B cell (primary cell): ENCODE measurements at regions of chr20 and their contacts with region 1.

Region 1: GRCh38 chr20:63627129-63627750 is 339 bp upstream of the GMEB2 start:
- DNase-seq: peak; percentile 98
- ATAC-seq: peak; percentile 78
- H3K4me3 ChIP-seq: peak overlapping the region; percentile 38 to 90 (median 87)
- H3K4me3 Mint-ChIP-seq: peak overlapping the region; percentile 95
- H3K27ac ChIP-seq: peak overlapping the region; percentile 75 to 84
- H3K27ac Mint-ChIP-seq: peak overlapping the region; percentile 93
- H3K4me1 ChIP-seq: peaks cover 33 to 47% of the 10 kb centered on the region in 2 donors
- H3K4me1 Mint-ChIP-seq: peaks cover 37% of the 10 kb centered on the region
- H3K27me3 ChIP-seq: no peaks in the 10 kb centered on the region
- H3K27me3 Mint-ChIP-seq: no peaks in the 10 kb centered on the region
- CTCF ChIP-seq: no peak

Region 2: GRCh38 chr20:63321136-63321831 is 306.0 kb before region 1 on chr20:
- CTCF ChIA-PET with region 1: no interaction called
- POLR2A ChIA-PET with region 1: no interaction called
- intact Hi-C with region 1: no loop called
- DNase-seq: no peak
- ATAC-seq: no peak
- H3K4me3 ChIP-seq: no peak overlapping the region
- H3K4me3 Mint-ChIP-seq: no peak overlapping the region
- H3K27ac ChIP-seq: no peak overlapping the region
- H3K27ac Mint-ChIP-seq: no peak overlapping the region
- H3K4me1 ChIP-seq: peaks cover 4 to 8% of the 10 kb centered on the region in 2 donors
- H3K4me1 Mint-ChIP-seq: no peaks in the 10 kb centered on the region
- H3K27me3 ChIP-seq: peaks cover 0 to 2% (median 0%) of the 10 kb centered on the region in 4 experiments
- H3K27me3 Mint-ChIP-seq: peaks cover 6% of the 10 kb centered on the region
- CTCF ChIP-seq: no peak

Region 3: GRCh38 chr20:63574156-63574828 is 52.9 kb before region 1 on chr20 and contains the start of gene HELZ2:
- CTCF ChIA-PET with region 1: interaction called, 3 read pairs
- POLR2A ChIA-PET with region 1: interaction called, 12 read pairs
- intact Hi-C with region 1: no loop called
- DNase-seq: peak; percentile 82
- ATAC-seq: peak; percentile 93
- H3K4me3 ChIP-seq: peak within 1 kb of the TSS; percentile 61 to 86 (median 79)
- H3K4me3 Mint-ChIP-seq: peak within 1 kb of the TSS; percentile 87
- H3K27ac ChIP-seq: peak within 1 kb of the TSS; percentile 71 to 86
- H3K27ac Mint-ChIP-seq: peak within 1 kb of the TSS; percentile 83
- H3K4me1 ChIP-seq: peaks cover 21 to 38% of the 10 kb centered on the region in 2 donors
- H3K4me1 Mint-ChIP-seq: peaks cover 9% of the 10 kb centered on the region
- H3K27me3 ChIP-seq: no peaks in the 10 kb centered on the region
- H3K27me3 Mint-ChIP-seq: no peaks in the 10 kb centered on the region
- CTCF ChIP-seq: no peak
- total RNA-seq, gene HELZ2: 52.6 and 53.7 TPM in 2 replicates

Region 4: GRCh38 chr20:63641792-63642544 is 14.7 kb after region 1 on chr20:
- CTCF ChIA-PET with region 1: interaction called, 20 read pairs
- POLR2A ChIA-PET with region 1: interaction called, 92 read pairs
- intact Hi-C with region 1: loop called (anchors 1 kb)
- DNase-seq: peak; percentile 96
- ATAC-seq: peak; percentile 72
- H3K4me3 ChIP-seq: peak overlapping the region in 4 of 5 experiments; percentile 84 to 97 (median 90)
- H3K4me3 Mint-ChIP-seq: peak overlapping the region; percentile 82
- H3K27ac ChIP-seq: peak overlapping the region; percentile 91
- H3K27ac Mint-ChIP-seq: peak overlapping the region; percentile 97
- H3K4me1 ChIP-seq: peaks cover 23 to 41% of the 10 kb centered on the region in 2 donors
- H3K4me1 Mint-ChIP-seq: peaks cover 28% of the 10 kb centered on the region
- H3K27me3 ChIP-seq: no peaks in the 10 kb centered on the region
- H3K27me3 Mint-ChIP-seq: peaks cover 4% of the 10 kb centered on the region
- CTCF ChIP-seq: peak; percentile 67

Region 5: DNA sequence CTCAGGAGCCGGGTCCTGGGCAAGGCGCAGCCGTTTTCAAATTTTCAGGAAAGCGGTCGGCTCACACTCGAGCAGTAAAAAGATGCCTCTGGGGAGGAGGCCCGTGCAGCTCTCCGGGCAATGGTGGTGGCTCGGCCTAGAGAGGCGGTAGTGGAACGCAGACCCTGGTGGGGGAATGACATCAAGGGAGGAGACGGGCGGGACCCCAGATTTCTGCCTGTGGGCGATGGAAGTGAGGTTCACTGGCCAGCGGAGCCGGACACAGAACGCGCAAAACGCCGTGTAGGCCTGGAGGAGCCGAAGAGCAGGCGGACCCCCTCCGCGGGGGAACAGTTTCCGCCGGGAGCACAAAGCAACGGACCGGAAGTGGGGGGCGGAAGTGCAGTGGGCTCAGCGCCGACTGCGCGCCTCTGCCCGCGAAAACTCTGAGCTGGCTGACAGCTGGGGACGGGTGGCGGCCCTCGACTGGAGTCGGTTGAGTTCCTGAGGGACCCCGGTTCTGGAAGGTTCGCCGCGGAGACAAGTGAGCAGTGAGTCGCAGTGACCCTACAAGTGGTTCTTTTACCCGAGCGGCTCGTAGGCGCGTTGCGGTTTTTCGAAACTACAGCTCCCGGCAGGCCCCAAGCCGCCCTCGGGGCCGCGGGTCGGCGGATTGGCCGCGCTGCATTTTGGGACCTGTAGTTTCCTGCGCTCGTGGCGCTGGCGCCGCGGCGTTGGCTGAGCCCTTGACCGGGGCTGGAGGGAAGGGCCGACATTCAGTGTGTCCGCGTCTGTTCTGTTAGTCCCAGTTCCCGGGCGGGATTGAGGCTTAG is 30.9 kb after region 1 on chr20 and contains the start of gene RTEL1:
- CTCF ChIA-PET with region 1: interaction called, 3 read pairs
- POLR2A ChIA-PET with region 1: interaction called, 9 read pairs
- intact Hi-C with region 1: loop called (anchors 1 kb)
- DNase-seq: peak; percentile 95
- ATAC-seq: peak; percentile 91
- H3K4me3 ChIP-seq: peak within 1 kb of the TSS; percentile 51 to 94 (median 84)
- H3K4me3 Mint-ChIP-seq: peak within 1 kb of the TSS; percentile 98
- H3K27ac ChIP-seq: peak within 1 kb of the TSS; percentile 47 to 70
- H3K27ac Mint-ChIP-seq: peak within 1 kb of the TSS; percentile 96
- H3K4me1 ChIP-seq: peaks cover 21 to 36% of the 10 kb centered on the region in 2 donors
- H3K4me1 Mint-ChIP-seq: peaks cover 21% of the 10 kb centered on the region
- H3K27me3 ChIP-seq: peaks cover 0 to 28% (median 10%) of the 10 kb centered on the region in 4 experiments
- H3K27me3 Mint-ChIP-seq: no peaks in the 10 kb centered on the region
- CTCF ChIP-seq: no peak
- total RNA-seq, gene RTEL1: 32.6 and 35.3 TPM in 2 replicates

Region 6: DNA sequence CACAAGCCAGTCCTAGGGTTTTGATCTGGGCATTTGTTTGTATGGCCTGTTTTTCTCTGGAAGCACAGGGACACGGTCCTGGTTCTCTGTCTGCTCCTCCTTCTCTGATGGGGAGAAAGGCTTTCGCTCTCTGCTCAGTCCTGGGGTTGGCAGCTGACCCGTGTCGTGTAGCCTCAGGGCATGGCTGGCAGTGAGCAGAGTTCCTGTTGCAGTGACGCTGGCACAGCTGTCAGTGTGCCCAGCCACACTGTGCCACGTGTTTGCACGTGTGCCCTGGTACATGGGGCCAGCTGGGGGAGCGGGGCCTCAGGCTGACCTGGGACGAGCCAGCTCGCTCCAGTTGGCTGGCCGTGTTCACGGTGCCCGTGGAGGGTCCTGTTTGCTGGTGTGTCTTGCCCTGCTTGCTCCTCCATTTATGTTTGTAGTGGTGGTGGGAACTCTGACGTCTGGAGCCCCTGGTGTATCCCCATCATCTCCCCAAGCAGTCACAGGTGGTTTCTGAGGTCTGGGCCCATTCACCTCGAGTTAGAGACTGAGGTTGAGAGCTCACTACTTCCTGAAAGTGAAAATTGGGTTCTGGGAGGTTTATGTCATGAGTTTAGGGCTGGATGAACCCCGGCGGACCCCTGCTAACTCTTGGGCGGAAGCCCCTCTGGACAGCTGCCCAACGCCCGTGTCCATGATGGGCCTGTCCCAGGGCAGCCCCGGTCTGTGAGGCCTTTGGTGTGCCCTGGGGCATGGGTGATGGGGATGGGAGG is 257.4 kb after region 1 on chr20:
- CTCF ChIA-PET with region 1: no interaction called
- POLR2A ChIA-PET with region 1: interaction called, 10 read pairs
- intact Hi-C with region 1: no loop called
- DNase-seq: no peak
- ATAC-seq: no peak
- H3K4me3 ChIP-seq: no peak overlapping the region
- H3K4me3 Mint-ChIP-seq: no peak overlapping the region
- H3K27ac ChIP-seq: no peak overlapping the region
- H3K27ac Mint-ChIP-seq: no peak overlapping the region
- H3K4me1 ChIP-seq: no peaks in the 10 kb centered on the region
- H3K4me1 Mint-ChIP-seq: no peaks in the 10 kb centered on the region
- H3K27me3 ChIP-seq: no peaks in the 10 kb centered on the region
- H3K27me3 Mint-ChIP-seq: no peaks in the 10 kb centered on the region
- CTCF ChIP-seq: no peak

Region 7: GRCh38 chr20:63894358-63895201 is 267.3 kb after region 1 on chr20 and contains the start of gene DNAJC5:
- CTCF ChIA-PET with region 1: no interaction called
- POLR2A ChIA-PET with region 1: no interaction called
- intact Hi-C with region 1: loop called (anchors 2 kb)
- DNase-seq: peak; percentile 98
- ATAC-seq: peak; percentile 94
- H3K4me3 ChIP-seq: peak within 1 kb of the TSS; percentile 38 to 81 (median 60)
- H3K4me3 Mint-ChIP-seq: peak within 1 kb of the TSS; percentile 93
- H3K27ac ChIP-seq: peak within 1 kb of the TSS; percentile 42 to 80
- H3K27ac Mint-ChIP-seq: peak within 1 kb of the TSS; percentile 91
- H3K4me1 ChIP-seq: peaks cover 16 to 36% of the 10 kb centered on the region in 2 donors
- H3K4me1 Mint-ChIP-seq: peaks cover 37% of the 10 kb centered on the region
- H3K27me3 ChIP-seq: no peaks in the 10 kb centered on the region
- H3K27me3 Mint-ChIP-seq: no peaks in the 10 kb centered on the region
- CTCF ChIP-seq: no peak
- total RNA-seq, gene DNAJC5: 32.6 and 33.3 TPM in 2 replicates